Naive thymus-derived CD4-positive, alpha-beta T cell (primary cell): ENCODE measurements at regions of chr19 and their contacts with region 1.

Region 1: GRCh38 chr19:36528194-36528920 is at the start of gene ZNF260:
- DNase-seq: peak; percentile 81 to 94 (median 90)
- ATAC-seq: peak; percentile 95
- H3K4me3 ChIP-seq: peak within 1 kb of the TSS; percentile 91
- H3K4me3 Mint-ChIP-seq: peak within 1 kb of the TSS; percentile 88 to 100 (median 98)
- H3K27ac ChIP-seq: peak within 1 kb of the TSS; percentile 83
- H3K27ac Mint-ChIP-seq: peak within 1 kb of the TSS; percentile 84 to 99 (median 96)
- H3K4me1 ChIP-seq: peaks cover 4 to 11% of the 10 kb centered on the region in 2 donors
- H3K4me1 Mint-ChIP-seq: peaks cover 15 to 31% (median 23%) of the 10 kb centered on the region in 7 donors
- H3K27me3 ChIP-seq: no peaks in the 10 kb centered on the region
- H3K27me3 Mint-ChIP-seq: no peaks in the 10 kb centered on the region
- total RNA-seq, gene ZNF260: 2.9 to 13.2 (median 11.3) TPM

Region 2: GRCh38 chr19:36378625-36379509 is 149.5 kb before region 1 on chr19 and contains the start of gene ZFP14:
- CTCF ChIA-PET with region 1: no interaction called
- POLR2A ChIA-PET with region 1: interaction called, 3 read pairs
- intact Hi-C with region 1: loop called (anchors 1 to 2 kb)
- DNase-seq: peak; percentile 86 to 95 (median 93)
- ATAC-seq: peak; percentile 99
- H3K4me3 ChIP-seq: peak within 1 kb of the TSS; percentile 86
- H3K4me3 Mint-ChIP-seq: peak within 1 kb of the TSS; percentile 82 to 98 (median 94)
- H3K27ac ChIP-seq: peak within 1 kb of the TSS; percentile 86
- H3K27ac Mint-ChIP-seq: peak within 1 kb of the TSS; percentile 55 to 98 (median 94)
- H3K4me1 ChIP-seq: peaks cover 0 to 10% of the 10 kb centered on the region in 2 donors
- H3K4me1 Mint-ChIP-seq: peaks cover 9 to 23% (median 21%) of the 10 kb centered on the region in 7 donors
- H3K27me3 ChIP-seq: no peaks in the 10 kb centered on the region
- H3K27me3 Mint-ChIP-seq: no peaks in the 10 kb centered on the region
- total RNA-seq, gene ZFP14: 5.3 to 24.0 (median 9.2) TPM

Region 3: GRCh38 chr19:36573020-36573885 is 44.9 kb after region 1 on chr19 and contains the start of gene ZNF529:
- CTCF ChIA-PET with region 1: no interaction called
- POLR2A ChIA-PET with region 1: interaction called, 13 read pairs
- intact Hi-C with region 1: loop called (anchors 1 kb)
- DNase-seq: peak; percentile 67 to 95 (median 85)
- ATAC-seq: peak; percentile 95
- H3K4me3 ChIP-seq: peak within 1 kb of the TSS; percentile 95
- H3K4me3 Mint-ChIP-seq: peak within 1 kb of the TSS; percentile 80 to 100 (median 93)
- H3K27ac ChIP-seq: peak within 1 kb of the TSS; percentile 98
- H3K27ac Mint-ChIP-seq: peak within 1 kb of the TSS; percentile 94 to 100 (median 98)
- H3K4me1 ChIP-seq: peaks cover 0 to 15% of the 10 kb centered on the region in 2 donors
- H3K4me1 Mint-ChIP-seq: peaks cover 23 to 46% (median 40%) of the 10 kb centered on the region in 7 donors
- H3K27me3 ChIP-seq: no peaks in the 10 kb centered on the region
- H3K27me3 Mint-ChIP-seq: no peaks in the 10 kb centered on the region
- total RNA-seq, gene ZNF529: 22.6 to 37.8 (median 33.8) TPM

Region 4: GRCh38 chr19:36687214-36688056 is 159.1 kb after region 1 on chr19 and contains the start of gene ZNF567:
- CTCF ChIA-PET with region 1: no interaction called
- POLR2A ChIA-PET with region 1: interaction called, 3 read pairs
- intact Hi-C with region 1: loop called (anchors 1 kb)
- DNase-seq: peak; percentile 90 to 99 (median 93)
- ATAC-seq: peak; percentile 97
- H3K4me3 ChIP-seq: peak within 1 kb of the TSS; percentile 85
- H3K4me3 Mint-ChIP-seq: peak within 1 kb of the TSS; percentile 94 to 100 (median 98)
- H3K27ac ChIP-seq: peak within 1 kb of the TSS; percentile 86
- H3K27ac Mint-ChIP-seq: peak within 1 kb of the TSS; percentile 92 to 97 (median 95)
- H3K4me1 ChIP-seq: peaks cover 13 to 22% of the 10 kb centered on the region in 2 donors
- H3K4me1 Mint-ChIP-seq: peaks cover 26 to 49% (median 40%) of the 10 kb centered on the region in 7 donors
- H3K27me3 ChIP-seq: no peaks in the 10 kb centered on the region
- H3K27me3 Mint-ChIP-seq: peaks cover 0 to 5% (median 0%) of the 10 kb centered on the region in 5 donors
- total RNA-seq, gene ZNF567: 7.0 to 18.3 (median 9.3) TPM

Region 5: DNA sequence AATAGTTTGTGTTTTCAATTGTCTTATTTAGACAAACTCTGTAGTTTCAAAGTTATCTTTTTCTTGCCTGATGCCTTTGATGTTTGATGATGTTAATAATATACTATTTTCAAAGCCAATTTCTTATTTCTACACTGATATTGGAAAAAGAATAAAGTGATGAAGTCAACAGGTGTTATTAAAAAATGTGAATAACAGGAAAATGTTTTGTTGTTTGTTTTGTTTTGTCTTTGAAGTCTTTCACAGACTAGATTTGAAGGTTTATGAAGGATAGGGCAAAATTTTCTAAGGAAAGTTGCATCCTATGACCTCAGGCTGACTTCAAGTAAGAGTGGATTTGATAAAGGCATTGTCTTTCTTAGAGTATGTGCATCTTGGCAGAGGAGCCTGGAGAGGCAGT is 278.7 kb after region 1 on chr19:
- CTCF ChIA-PET with region 1: no interaction called
- POLR2A ChIA-PET with region 1: no interaction called
- intact Hi-C with region 1: no loop called
- DNase-seq: no peak
- ATAC-seq: no peak
- H3K4me3 ChIP-seq: no peak overlapping the region
- H3K4me3 Mint-ChIP-seq: no peak overlapping the region
- H3K27ac ChIP-seq: no peak overlapping the region
- H3K27ac Mint-ChIP-seq: no peak overlapping the region
- H3K4me1 ChIP-seq: no peaks in the 10 kb centered on the region
- H3K4me1 Mint-ChIP-seq: no peaks in the 10 kb centered on the region
- H3K27me3 ChIP-seq: no peaks in the 10 kb centered on the region
- H3K27me3 Mint-ChIP-seq: no peaks in the 10 kb centered on the region

Region 6: GRCh38 chr19:36850559-36851442 is 322.4 kb after region 1 on chr19 and contains the start of gene ZNF345:
- CTCF ChIA-PET with region 1: no interaction called
- POLR2A ChIA-PET with region 1: interaction called, 8 read pairs
- intact Hi-C with region 1: loop called (anchors 1 kb)
- DNase-seq: peak; percentile 62 to 91 (median 88)
- ATAC-seq: peak; percentile 93
- H3K4me3 ChIP-seq: peak within 1 kb of the TSS; percentile 92
- H3K4me3 Mint-ChIP-seq: no peak within 1 kb of the TSS
- H3K27ac ChIP-seq: peak within 1 kb of the TSS; percentile 86
- H3K27ac Mint-ChIP-seq: no peak within 1 kb of the TSS
- H3K4me1 ChIP-seq: peaks cover 9 to 16% of the 10 kb centered on the region in 2 donors
- H3K4me1 Mint-ChIP-seq: peaks cover 0 to 22% (median 13%) of the 10 kb centered on the region in 7 donors
- H3K27me3 ChIP-seq: no peaks in the 10 kb centered on the region
- H3K27me3 Mint-ChIP-seq: no peaks in the 10 kb centered on the region
- total RNA-seq, gene ZNF345: 6.8 to 18.2 (median 7.8) TPM

Region 7: GRCh38 chr19:37172368-37173366 is 644.3 kb after region 1 on chr19 and contains the start of gene ZNF585A:
- CTCF ChIA-PET with region 1: no interaction called
- POLR2A ChIA-PET with region 1: no interaction called
- intact Hi-C with region 1: loop called in 1 of 2 experiments (anchors 5 kb)
- DNase-seq: peak; percentile 68 to 92 (median 88)
- ATAC-seq: peak; percentile 100
- H3K4me3 ChIP-seq: peak within 1 kb of the TSS; percentile 90
- H3K4me3 Mint-ChIP-seq: peak within 1 kb of the TSS in 3 of 10 donors; percentile 36 to 73 (median 39)
- H3K27ac ChIP-seq: peak within 1 kb of the TSS; percentile 84
- H3K27ac Mint-ChIP-seq: no peak within 1 kb of the TSS
- H3K4me1 ChIP-seq: no peaks in the 10 kb centered on the region
- H3K4me1 Mint-ChIP-seq: peaks cover 0 to 16% (median 4%) of the 10 kb centered on the region in 7 donors
- H3K27me3 ChIP-seq: no peaks in the 10 kb centered on the region
- H3K27me3 Mint-ChIP-seq: no peaks in the 10 kb centered on the region
- total RNA-seq, gene ZNF585A: 3.5 to 24.3 (median 7.2) TPM